T-cell (primary cell): ENCODE measurements at regions of chr4 and their contacts with region 1.

Region 1: DNA sequence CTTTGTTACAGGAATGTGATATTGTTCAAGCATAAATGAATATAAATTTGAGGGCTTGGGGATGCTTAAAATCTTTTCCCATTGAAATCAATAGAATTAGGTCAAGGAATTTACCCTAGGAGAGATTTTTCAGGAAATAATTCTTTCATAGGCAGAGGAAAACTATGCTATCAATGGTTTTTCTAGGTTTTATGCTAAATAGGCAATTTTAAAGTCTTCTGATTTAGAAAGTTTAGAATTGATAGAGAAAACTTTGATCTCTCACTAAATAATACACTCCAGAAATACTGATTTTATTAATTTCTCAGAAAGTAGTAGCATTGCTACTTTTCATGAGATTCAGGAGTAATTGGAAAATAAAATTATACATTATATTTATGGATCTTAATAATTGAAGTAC is 36.5 kb upstream of the GNRHR start:
- DNase-seq: no peak
- ATAC-seq: no peak
- H3K4me3 ChIP-seq: no peak overlapping the region
- H3K4me3 Mint-ChIP-seq: no peak overlapping the region
- H3K27ac ChIP-seq: no peak overlapping the region
- H3K27ac Mint-ChIP-seq: no peak overlapping the region
- H3K4me1 ChIP-seq: no peaks in the 10 kb centered on the region
- H3K4me1 Mint-ChIP-seq: no peaks in the 10 kb centered on the region
- H3K27me3 ChIP-seq: no peaks in the 10 kb centered on the region
- H3K27me3 Mint-ChIP-seq: no peaks in the 10 kb centered on the region

Region 2: DNA sequence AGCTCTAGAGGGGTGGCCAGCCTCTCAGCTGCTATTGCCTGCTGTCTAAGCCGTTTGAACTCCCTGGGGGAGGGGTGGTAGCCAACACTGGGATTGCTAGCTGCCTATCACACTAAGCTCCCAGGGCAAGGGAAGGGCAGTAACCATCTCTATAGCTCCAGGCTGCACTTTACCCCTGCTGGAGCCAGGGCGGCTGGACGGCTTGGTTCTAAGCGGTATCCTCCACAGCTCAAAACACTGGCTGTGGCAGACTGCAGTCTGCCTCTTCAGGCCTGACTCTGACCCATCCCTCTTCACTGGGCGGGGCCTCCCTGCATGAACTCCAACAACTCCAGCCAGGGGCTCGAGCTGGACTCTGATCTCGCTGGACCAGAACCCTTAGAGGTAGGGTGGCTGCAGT is 18.8 kb after region 1 on chr4:
- CTCF ChIA-PET with region 1: no interaction called
- POLR2A ChIA-PET with region 1: interaction called in 1 of 2 experiments, 10 read pairs
- DNase-seq: no peak
- ATAC-seq: no peak
- H3K4me3 ChIP-seq: no peak overlapping the region
- H3K4me3 Mint-ChIP-seq: no peak overlapping the region
- H3K27ac ChIP-seq: no peak overlapping the region
- H3K27ac Mint-ChIP-seq: no peak overlapping the region
- H3K4me1 ChIP-seq: no peaks in the 10 kb centered on the region
- H3K4me1 Mint-ChIP-seq: no peaks in the 10 kb centered on the region
- H3K27me3 ChIP-seq: no peaks in the 10 kb centered on the region
- H3K27me3 Mint-ChIP-seq: peaks cover 0 to 3% of the 10 kb centered on the region in 2 donors